ENCODE measurements at regions of chr19 and their contacts with region 1.

Region 1: DNA sequence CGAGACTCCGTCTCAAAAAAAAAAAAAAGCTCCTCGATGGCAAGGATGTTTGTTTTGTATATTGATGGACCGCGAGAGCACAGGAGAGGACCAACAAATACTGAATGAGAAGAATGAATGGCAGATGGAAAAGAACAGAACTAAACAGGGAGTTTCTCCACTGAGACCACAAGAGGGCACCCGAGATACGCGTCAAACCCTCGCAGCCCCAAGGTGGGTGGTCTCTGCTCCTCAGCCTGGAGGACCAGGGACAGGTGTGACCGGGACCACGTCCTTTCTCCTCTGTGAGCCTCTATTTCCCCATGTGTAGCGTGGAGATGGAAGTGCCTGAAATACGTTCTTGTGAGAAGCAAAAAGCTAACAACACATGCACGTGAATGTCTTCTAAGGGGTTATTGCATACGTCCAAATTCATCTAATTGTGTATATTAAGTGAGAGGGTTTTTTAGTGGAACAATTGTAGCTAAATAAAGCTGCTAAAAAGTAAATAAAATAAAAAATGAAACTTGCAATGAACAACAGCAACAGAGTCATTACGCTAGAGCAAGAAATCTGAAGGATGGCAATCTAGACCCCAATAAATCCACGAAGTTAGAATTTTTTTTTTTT is 8.3 kb upstream of the CDC42EP5 start:
- DNase-seq: peak; percentile 29
- H3K4me3 Mint-ChIP-seq: no peak overlapping the region
- H3K27ac Mint-ChIP-seq: no peak overlapping the region
- H3K4me1 Mint-ChIP-seq: peaks cover 14% of the 10 kb centered on the region
- H3K27me3 Mint-ChIP-seq: peaks cover 15% of the 10 kb centered on the region

Region 2: DNA sequence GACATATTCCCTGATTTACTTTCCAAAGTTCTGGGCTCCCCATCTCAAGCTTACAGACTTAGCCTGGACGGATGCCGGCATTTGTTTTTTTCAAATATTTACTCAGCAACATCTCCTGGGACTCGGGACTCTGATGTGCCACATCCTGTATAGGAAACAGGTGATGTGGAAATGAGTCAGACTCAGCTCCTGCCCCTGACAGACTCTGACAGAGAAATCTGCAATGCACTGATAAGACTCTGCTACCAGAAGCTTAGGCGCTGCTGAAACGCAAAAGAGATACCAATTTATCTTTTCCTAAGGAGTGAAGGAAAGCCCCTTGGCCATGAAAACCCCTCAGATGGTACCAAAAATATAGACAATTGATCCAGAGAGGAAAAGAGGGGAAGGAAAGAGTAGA is 37.4 kb after region 1 on chr19:
- intact Hi-C with region 1: loop called (anchors 5 kb)
- DNase-seq: peak; percentile 51
- H3K4me3 Mint-ChIP-seq: peak overlapping the region; percentile 71
- H3K27ac Mint-ChIP-seq: peak overlapping the region; percentile 91
- H3K4me1 Mint-ChIP-seq: peaks cover 59% of the 10 kb centered on the region
- H3K27me3 Mint-ChIP-seq: peaks cover 3% of the 10 kb centered on the region

Region 3: GRCh38 chr19:54648125-54648524 is 166.7 kb after region 1 on chr19:
- intact Hi-C with region 1: loop called (anchors 1 kb)
- DNase-seq: no peak
- H3K4me3 Mint-ChIP-seq: no peak overlapping the region
- H3K27ac Mint-ChIP-seq: no peak overlapping the region
- H3K4me1 Mint-ChIP-seq: no peaks in the 10 kb centered on the region
- H3K27me3 Mint-ChIP-seq: peaks cover 9% of the 10 kb centered on the region

Region 4: DNA sequence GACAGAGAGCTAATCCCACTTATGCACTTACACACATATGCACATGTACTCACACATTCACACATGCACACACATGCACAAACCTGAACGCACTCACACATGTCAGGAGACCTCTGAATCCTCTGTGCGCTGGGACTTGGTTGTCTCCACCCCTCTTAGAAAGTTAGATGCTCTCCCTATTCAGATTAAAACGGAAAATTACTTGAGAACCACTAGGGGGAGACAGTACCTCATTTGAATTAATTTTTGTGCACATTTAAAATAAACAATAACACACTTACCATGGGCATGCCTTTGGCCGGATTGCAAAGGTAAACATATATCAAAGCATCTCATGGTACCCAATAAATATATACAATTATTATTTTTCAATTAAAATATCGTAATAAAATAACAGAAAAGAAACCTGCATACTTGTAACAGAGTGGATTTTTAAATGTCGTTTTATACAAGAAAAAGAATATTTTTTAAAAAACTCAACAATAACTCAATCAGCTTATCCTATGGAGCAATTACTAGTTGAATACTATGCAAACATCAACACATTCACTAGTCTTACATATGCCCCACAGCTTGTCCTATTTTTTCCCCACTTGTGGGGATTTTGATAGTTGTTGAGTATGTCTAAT is 171.9 kb after region 1 on chr19:
- intact Hi-C with region 1: loop called (anchors 1 kb)
- DNase-seq: no peak
- H3K4me3 Mint-ChIP-seq: no peak overlapping the region
- H3K27ac Mint-ChIP-seq: no peak overlapping the region
- H3K4me1 Mint-ChIP-seq: no peaks in the 10 kb centered on the region
- H3K27me3 Mint-ChIP-seq: peaks cover 10% of the 10 kb centered on the region

Region 5: DNA sequence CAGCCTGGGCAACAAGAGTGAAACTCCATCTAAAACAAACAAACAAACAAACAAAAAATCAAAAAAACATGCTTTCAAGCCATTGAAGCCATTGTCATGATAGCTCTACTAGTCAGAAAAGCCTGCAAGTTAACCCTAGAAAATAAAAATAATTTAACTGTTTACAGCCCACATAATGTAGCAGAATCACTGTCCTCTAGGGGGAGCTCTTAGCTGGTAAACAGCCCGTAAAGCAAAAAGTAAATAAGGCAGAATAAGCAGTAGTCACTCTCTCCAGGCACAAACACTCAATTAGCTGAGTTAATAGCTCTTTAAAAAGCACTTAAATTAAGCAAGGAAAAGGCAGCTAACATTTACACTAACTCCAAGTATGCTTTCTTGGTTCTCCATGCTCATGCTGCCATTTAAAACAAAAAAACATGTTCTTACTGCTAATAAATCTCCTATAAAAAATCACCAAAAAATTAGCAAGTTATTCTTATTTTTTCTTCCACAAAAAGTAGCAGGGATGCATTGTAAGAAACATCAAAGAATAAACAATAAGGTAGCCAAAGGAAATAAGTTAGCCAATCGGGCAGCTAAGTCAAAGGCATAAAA is 192.7 kb after region 1 on chr19:
- intact Hi-C with region 1: loop called (anchors 1 kb)
- DNase-seq: no peak
- H3K4me3 Mint-ChIP-seq: no peak overlapping the region
- H3K27ac Mint-ChIP-seq: no peak overlapping the region
- H3K4me1 Mint-ChIP-seq: peaks cover 4% of the 10 kb centered on the region
- H3K27me3 Mint-ChIP-seq: peaks cover 4% of the 10 kb centered on the region

Region 6: GRCh38 chr19:54918499-54918898 is 437.1 kb after region 1 on chr19:
- intact Hi-C with region 1: loop called (anchors 2 kb)
- DNase-seq: no peak
- H3K4me3 Mint-ChIP-seq: no peak overlapping the region
- H3K27ac Mint-ChIP-seq: no peak overlapping the region
- H3K4me1 Mint-ChIP-seq: peaks cover 5% of the 10 kb centered on the region
- H3K27me3 Mint-ChIP-seq: no peaks in the 10 kb centered on the region

Measured in activated T-helper 1 cell treated with anti-CD3 and anti-CD28 coated beads, Interleukin-12 subunit alpha, Interleukin-12 subunit beta, Interleukin-2, Interleukin-4 antibody, amounts not matched to agents 30 ng/mL and 10 ng/mL and 1 ng/mL, durations not matched to agents 14 hours and 24 hours and 36 hours (primary cell).